A673 (cell line): ENCODE measurements at regions of chr1 and their contacts with region 1.

Region 1: GRCh38 chr1:185170291-185170848 is 13.4 kb downstream of the SWT1 start:
- DNase-seq: peak; percentile 88
- H3K4me3 ChIP-seq: peak overlapping the region; percentile 7
- H3K27ac ChIP-seq: no peak overlapping the region
- H3K4me1 ChIP-seq: no peaks in the 10 kb centered on the region
- H3K27me3 ChIP-seq: no peaks in the 10 kb centered on the region
- CTCF ChIP-seq: peak; percentile 98

Region 2: GRCh38 chr1:184716158-184716557 is 454.2 kb before region 1 on chr1:
- CTCF ChIA-PET with region 1: no interaction called
- POLR2A ChIA-PET with region 1: no interaction called
- intact Hi-C with region 1: no loop called
- DNase-seq: no peak
- H3K4me3 ChIP-seq: no peak overlapping the region
- H3K27ac ChIP-seq: no peak overlapping the region
- H3K4me1 ChIP-seq: no peaks in the 10 kb centered on the region
- H3K27me3 ChIP-seq: no peaks in the 10 kb centered on the region
- CTCF ChIP-seq: no peak

Region 3: GRCh38 chr1:184805667-184806295 is 364.6 kb before region 1 on chr1:
- CTCF ChIA-PET with region 1: interaction called, 28 read pairs
- POLR2A ChIA-PET with region 1: no interaction called
- intact Hi-C with region 1: loop called (anchors 1 kb)
- DNase-seq: peak; percentile 88
- H3K4me3 ChIP-seq: no peak overlapping the region
- H3K27ac ChIP-seq: no peak overlapping the region
- H3K4me1 ChIP-seq: no peaks in the 10 kb centered on the region
- H3K27me3 ChIP-seq: no peaks in the 10 kb centered on the region
- CTCF ChIP-seq: peak; percentile 95

Region 4: GRCh38 chr1:184982002-184982954 is 188.1 kb before region 1 on chr1:
- CTCF ChIA-PET with region 1: interaction called, 7 read pairs
- POLR2A ChIA-PET with region 1: no interaction called
- intact Hi-C with region 1: loop called (anchors 2 kb)
- DNase-seq: peak; percentile 83
- H3K4me3 ChIP-seq: no peak overlapping the region
- H3K27ac ChIP-seq: no peak overlapping the region
- H3K4me1 ChIP-seq: no peaks in the 10 kb centered on the region
- H3K27me3 ChIP-seq: no peaks in the 10 kb centered on the region
- CTCF ChIP-seq: peak; percentile 93